ENCODE measurements at regions of chr5 and their contacts with region 1.

Region 1: GRCh38 chr5:62661126-62661525 is 82.5 kb downstream of the LRRC70 start:
- DNase-seq: peak; percentile 47
- ATAC-seq: peak; percentile 100
- H3K4me3 ChIP-seq: peak overlapping the region; percentile 22 to 57 (median 23); a peak in 3 of 6 replicates
- H3K27ac ChIP-seq: no peak overlapping the region
- H3K4me1 ChIP-seq: peaks cover 16% of the 10 kb centered on the region; the same call in 1 of the 2 replicates
- H3K27me3 ChIP-seq: no peaks in the 10 kb centered on the region
- CTCF ChIP-seq: peak; percentile 63
- EP300 ChIP-seq: no peak
- POLR2A ChIP-seq: no peak
- RAD21 ChIP-seq: peak; percentile 49; the same call in 1 of the 2 replicates

Region 2: DNA sequence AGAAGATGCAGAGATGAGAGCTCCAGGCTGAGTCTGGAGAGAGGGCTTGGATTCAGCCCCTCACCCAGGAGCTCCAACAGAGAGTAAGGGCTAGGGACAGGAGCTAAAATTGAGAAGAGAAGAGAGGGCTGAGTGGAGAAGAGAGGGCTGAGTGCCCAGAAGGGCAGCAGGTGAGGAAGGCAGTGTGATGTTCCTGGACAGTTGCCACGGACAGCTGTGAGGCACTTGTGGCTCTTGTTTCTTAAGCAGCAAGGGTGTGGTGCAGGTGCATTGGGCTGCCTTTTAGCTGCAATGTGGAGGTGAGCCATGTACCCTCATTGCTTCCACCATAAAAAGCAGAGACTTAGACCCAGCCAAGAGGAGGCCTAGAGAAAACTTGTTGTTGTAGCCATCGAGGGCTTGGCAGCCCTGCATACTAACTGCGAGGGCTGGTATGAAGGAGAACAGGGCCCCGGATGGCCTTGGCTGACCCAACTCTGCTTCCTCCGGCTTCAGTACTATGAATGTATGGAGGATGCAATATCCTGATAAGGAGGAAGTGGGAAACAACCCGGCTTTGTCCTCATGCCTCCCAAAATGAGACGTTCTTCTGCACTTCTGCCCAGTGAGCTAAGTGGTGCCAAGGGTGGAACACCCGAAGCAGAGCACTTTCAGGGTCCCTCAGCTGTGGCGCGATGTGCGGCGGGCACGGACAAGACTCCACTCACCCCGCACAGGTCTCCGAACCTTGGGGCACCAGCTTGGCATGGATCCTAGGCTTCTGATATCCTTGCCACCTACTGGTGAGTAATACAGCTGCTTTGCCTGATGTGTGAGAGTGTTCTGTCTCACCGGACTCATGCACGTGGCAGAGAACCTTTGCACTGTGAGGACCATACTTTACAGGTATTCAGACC is 17.3 kb before region 1 on chr5:
- CTCF ChIA-PET with region 1: no interaction called
- POLR2A ChIA-PET with region 1: no interaction called
- in situ Hi-C with region 1: no loop called
- intact Hi-C with region 1: no loop called
- DNase-seq: no peak
- ATAC-seq: peak; percentile 45
- H3K4me3 ChIP-seq: no peak overlapping the region
- H3K27ac ChIP-seq: no peak overlapping the region
- H3K4me1 ChIP-seq: peaks cover 43% of the 10 kb centered on the region
- H3K27me3 ChIP-seq: no peaks in the 10 kb centered on the region
- CTCF ChIP-seq: no peak
- EP300 ChIP-seq: no peak
- POLR2A ChIP-seq: no peak
- RAD21 ChIP-seq: no peak

Region 3: DNA sequence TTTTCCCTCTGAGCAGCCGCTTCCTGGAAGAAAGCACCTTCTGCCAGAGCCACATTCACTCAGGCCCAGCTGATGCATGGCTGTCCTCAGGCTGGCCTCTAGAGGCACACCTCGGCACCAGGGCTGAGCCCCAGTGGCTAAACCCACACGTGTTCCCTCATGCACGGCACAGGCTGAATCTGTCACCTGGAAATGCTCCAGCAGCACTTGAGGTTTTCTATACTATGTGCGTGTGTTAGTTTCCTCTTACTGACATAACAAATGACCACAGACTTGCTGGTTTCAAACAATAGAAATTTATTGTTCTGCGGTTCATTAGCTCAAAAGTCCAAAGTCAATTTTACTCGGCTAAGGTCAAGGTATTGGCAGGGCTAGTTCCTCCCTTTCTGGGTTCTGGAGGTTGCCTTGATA is 58.9 kb after region 1 on chr5:
- CTCF ChIA-PET with region 1: no interaction called
- POLR2A ChIA-PET with region 1: no interaction called
- in situ Hi-C with region 1: no loop called
- intact Hi-C with region 1: loop called (anchors 10 kb)
- DNase-seq: peak; percentile 30
- ATAC-seq: peak; percentile 100
- H3K4me3 ChIP-seq: no peak overlapping the region
- H3K27ac ChIP-seq: no peak overlapping the region
- H3K4me1 ChIP-seq: 0 out of 2 replicates have a peak, but pooled peaks cover 4% of the 10 kb centered on the region
- H3K27me3 ChIP-seq: no peaks in the 10 kb centered on the region
- CTCF ChIP-seq: peak; percentile 65
- EP300 ChIP-seq: no peak
- POLR2A ChIP-seq: no peak
- RAD21 ChIP-seq: no peak

Region 4: DNA sequence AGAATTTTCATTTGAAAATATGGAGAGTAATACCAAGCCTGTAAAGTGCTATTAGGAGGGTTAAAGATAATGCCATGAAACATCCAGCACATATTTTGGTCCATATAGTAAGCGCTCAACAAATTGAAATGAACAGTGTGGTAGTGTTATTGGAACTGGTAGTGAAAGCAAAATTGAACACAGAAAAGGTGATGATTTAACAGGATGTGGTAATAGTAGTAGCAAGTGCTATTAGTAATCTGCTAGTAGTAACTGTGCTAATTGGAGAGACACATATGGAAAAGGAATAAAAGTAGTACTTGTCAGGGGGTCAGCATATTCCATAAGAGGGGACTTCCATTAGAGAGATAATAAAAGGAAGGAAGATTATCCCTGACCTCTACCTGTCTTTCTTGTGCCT is 1113.8 kb after region 1 on chr5:
- CTCF ChIA-PET with region 1: no interaction called
- POLR2A ChIA-PET with region 1: no interaction called
- in situ Hi-C with region 1: no loop called
- intact Hi-C with region 1: no loop called
- DNase-seq: no peak
- ATAC-seq: no peak
- H3K4me3 ChIP-seq: no peak overlapping the region
- H3K27ac ChIP-seq: no peak overlapping the region
- H3K4me1 ChIP-seq: no peaks in the 10 kb centered on the region
- H3K27me3 ChIP-seq: no peaks in the 10 kb centered on the region; a peak in 1 of 5 replicates
- CTCF ChIP-seq: no peak
- EP300 ChIP-seq: no peak
- POLR2A ChIP-seq: no peak
- RAD21 ChIP-seq: no peak

Measured in HepG2 (cell line).